GM23248 (cell line): ENCODE measurements at regions of chr7 and their contacts with region 1.

Region 1: DNA sequence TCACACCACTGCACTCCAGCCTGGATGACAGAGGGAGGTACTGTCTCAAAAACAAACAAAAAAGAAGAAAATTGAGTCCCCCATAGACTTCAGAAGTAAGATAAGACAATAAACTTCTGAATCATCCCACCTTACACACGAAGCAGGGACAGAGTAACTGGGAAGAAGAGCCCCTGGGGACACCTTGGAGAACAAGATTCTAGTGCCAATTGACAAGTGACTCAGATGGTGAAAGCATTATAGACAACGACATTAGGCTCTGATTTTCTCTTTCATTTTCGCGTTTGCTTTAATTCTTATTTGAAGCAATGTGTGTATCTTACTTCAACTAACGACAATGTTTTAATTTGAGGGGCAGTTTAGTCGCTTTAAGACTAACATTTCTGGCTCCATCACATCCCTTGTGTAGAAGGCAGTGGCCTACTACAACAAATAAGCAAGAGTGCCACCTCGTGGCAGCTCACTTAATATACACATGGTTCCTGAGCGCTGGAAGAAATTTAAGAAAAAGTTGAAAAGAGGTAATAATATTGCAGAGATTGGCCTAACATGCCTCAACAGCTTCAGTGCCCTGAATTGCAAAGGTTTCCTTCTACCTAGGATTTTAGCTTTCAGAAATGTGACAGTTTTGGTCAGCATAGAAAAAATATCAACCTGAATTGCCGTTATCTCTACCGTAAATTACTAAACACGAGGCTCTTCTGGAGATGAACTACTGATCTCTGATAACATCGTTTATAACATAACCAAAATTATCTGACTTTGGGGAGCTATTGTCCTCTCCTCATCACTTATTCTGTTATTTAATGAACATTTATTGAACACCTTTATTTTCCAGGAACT is 36.7 kb downstream of the ASNS start:
- DNase-seq: peak; percentile 81
- H3K4me3 ChIP-seq: no peak overlapping the region
- H3K27ac ChIP-seq: no peak overlapping the region
- H3K4me1 ChIP-seq: no peaks in the 10 kb centered on the region
- H3K27me3 ChIP-seq: peaks cover 16% of the 10 kb centered on the region

Region 2: DNA sequence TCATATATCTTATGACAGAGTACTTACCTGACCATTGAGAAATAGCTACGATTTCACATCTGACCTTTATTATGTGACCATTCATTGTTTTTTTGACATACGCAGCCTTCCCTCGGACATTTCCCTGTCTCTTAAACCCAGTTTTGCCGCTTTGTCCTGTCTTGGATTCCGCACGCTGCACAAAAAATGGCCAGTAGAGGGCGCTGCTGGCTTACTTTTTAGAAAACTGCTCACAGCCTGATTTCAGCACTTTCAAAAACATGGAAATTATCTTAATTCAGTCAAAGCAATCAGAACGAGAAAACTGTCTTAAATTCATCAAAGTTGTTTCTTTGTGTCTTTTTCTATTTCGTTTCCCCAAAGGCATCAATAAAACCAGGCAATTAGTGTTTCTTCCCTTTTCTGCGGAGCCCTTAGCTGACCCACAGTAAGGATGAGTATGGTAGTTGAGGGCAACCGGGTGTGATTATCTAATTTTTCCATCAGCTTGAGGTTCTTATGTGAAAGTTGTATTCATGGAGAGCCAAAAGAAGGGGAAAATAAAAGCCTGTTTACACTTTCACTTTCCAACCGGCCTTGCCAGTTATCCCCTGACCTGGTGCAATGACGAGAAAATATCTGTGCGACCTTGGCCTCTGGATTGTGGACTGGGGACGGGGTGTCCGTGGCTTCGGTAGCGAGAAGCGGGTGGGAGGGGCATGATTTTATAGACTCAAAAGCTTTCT is 1918.8 kb before region 1 on chr7:
- in situ Hi-C with region 1: loop called (anchors 25 kb)
- DNase-seq: peak; percentile 72
- H3K4me3 ChIP-seq: peak overlapping the region; percentile 59
- H3K27ac ChIP-seq: no peak overlapping the region
- H3K4me1 ChIP-seq: peaks cover 5% of the 10 kb centered on the region
- H3K27me3 ChIP-seq: no peaks in the 10 kb centered on the region; the same call in 1 of the 2 replicates

Region 3: DNA sequence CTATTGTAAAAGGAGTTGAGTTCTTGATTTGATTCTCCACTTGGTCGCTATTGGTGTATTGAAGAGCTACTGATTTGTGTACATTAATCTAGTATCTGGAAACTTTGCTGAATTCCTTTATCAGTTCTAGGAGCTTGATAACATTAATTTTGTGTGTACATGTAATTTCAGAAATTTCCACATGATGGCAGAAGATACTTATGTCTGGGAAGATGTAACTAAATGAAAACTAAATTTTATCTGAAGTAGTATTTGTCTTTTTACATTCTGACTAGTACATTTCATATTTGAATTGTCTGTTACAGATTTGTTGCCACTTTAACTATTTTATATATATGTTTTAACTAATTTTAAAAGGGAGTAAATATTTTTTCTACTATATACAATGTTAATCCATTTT is 690.4 kb before region 1 on chr7:
- in situ Hi-C with region 1: loop called (anchors 25 kb)
- DNase-seq: peak; percentile 43
- H3K4me3 ChIP-seq: no peak overlapping the region
- H3K27ac ChIP-seq: no peak overlapping the region
- H3K4me1 ChIP-seq: peaks cover 6% of the 10 kb centered on the region; the same call in 1 of the 2 replicates
- H3K27me3 ChIP-seq: no peaks in the 10 kb centered on the region

Region 4: DNA sequence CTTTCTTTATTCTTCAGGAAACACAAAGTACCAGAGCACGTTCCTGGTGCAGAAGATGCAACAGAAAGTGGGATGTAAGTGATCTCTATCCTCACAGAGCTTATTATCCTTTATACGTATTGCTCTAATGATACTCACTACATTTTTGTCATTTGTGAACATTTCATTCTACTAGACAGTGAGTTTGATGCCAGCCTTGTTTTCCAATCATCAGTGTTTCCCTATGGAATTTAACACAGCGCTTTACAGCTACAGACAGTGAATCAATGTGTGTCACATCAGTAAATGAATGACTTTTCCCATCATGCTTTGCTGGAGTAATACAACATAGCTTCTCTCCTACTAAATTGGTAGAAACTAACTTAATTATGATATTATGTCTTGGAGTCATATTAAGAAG is 542.5 kb before region 1 on chr7:
- in situ Hi-C with region 1: no loop called
- DNase-seq: no peak
- H3K4me3 ChIP-seq: no peak overlapping the region
- H3K27ac ChIP-seq: no peak overlapping the region
- H3K4me1 ChIP-seq: no peaks in the 10 kb centered on the region
- H3K27me3 ChIP-seq: no peaks in the 10 kb centered on the region